ENCODE measurements at regions of chr2 and their contacts with region 1.

Region 1: GRCh38 chr2:173027181-173028128 is 48.2 kb upstream of the MAP3K20 start:
- DNase-seq: peak; percentile 87
- ATAC-seq: peak; percentile 63
- H3K4me3 Mint-ChIP-seq: no peak overlapping the region
- H3K27ac Mint-ChIP-seq: no peak overlapping the region
- H3K4me1 Mint-ChIP-seq: peaks cover 4% of the 10 kb centered on the region
- H3K27me3 Mint-ChIP-seq: peaks cover 6% of the 10 kb centered on the region

Region 2: GRCh38 chr2:173002751-173003541 is 24.5 kb before region 1 on chr2:
- CTCF ChIA-PET with region 1: interaction called, 12 read pairs
- POLR2A ChIA-PET with region 1: no interaction called
- intact Hi-C with region 1: no loop called
- DNase-seq: no peak
- ATAC-seq: no peak
- H3K4me3 Mint-ChIP-seq: no peak overlapping the region
- H3K27ac Mint-ChIP-seq: no peak overlapping the region
- H3K4me1 Mint-ChIP-seq: no peaks in the 10 kb centered on the region
- H3K27me3 Mint-ChIP-seq: peaks cover 4% of the 10 kb centered on the region

Region 3: DNA sequence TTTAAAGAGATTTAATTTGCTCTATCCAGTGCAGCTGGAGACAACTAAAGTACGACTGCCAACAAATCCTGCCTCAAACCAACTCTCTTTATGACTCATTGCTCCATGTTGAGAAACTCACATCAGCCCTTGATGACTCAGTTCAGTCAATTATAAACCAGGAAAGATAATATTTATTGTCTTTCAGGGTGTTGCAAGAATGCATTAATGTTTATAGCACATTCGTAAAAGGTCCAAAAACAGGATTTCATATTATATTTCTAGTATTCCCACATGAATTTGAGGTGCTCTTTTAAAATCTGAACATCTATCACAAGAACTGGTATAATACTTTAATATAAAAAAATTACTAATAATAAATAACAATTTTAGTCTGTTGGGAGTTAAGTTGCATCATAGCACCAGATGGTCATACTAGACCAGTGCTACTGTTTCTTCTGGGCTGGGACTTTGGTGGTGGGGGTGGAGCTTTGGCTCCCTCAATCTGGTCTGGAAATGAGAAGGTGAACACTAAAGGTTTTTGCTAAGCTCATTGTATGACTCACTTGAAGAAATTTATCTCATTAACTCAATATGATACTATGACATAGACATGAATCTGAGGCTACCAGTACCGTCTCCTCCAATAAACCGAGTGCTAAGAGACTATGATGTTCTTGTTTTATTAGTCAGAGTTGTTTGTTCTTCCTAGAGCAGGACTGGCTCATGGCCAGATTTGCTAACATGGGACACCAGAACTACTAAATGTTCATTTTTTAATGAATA is 21.6 kb after region 1 on chr2:
- CTCF ChIA-PET with region 1: interaction called, 16 read pairs
- POLR2A ChIA-PET with region 1: interaction called, 3 read pairs
- intact Hi-C with region 1: no loop called
- DNase-seq: peak; percentile 70
- ATAC-seq: peak; percentile 98
- H3K4me3 Mint-ChIP-seq: peak overlapping the region; percentile 22
- H3K27ac Mint-ChIP-seq: peak overlapping the region; percentile 59
- H3K4me1 Mint-ChIP-seq: peaks cover 17% of the 10 kb centered on the region
- H3K27me3 Mint-ChIP-seq: peaks cover 9% of the 10 kb centered on the region

Region 4: GRCh38 chr2:173075781-173076580 is 48.5 kb after region 1 on chr2 and contains the start of gene MAP3K20:
- CTCF ChIA-PET with region 1: interaction called, 12 read pairs
- POLR2A ChIA-PET with region 1: no interaction called
- intact Hi-C with region 1: loop called in 1 of 2 experiments (anchors 2 kb)
- DNase-seq: peak; percentile 73
- ATAC-seq: peak; percentile 85
- H3K4me3 Mint-ChIP-seq: peak within 1 kb of the TSS; percentile 76
- H3K27ac Mint-ChIP-seq: peak within 1 kb of the TSS; percentile 76
- H3K4me1 Mint-ChIP-seq: peaks cover 22% of the 10 kb centered on the region
- H3K27me3 Mint-ChIP-seq: peaks cover 33% of the 10 kb centered on the region
- total RNA-seq, gene MAP3K20: 8.1 to 8.4 TPM

Region 5: DNA sequence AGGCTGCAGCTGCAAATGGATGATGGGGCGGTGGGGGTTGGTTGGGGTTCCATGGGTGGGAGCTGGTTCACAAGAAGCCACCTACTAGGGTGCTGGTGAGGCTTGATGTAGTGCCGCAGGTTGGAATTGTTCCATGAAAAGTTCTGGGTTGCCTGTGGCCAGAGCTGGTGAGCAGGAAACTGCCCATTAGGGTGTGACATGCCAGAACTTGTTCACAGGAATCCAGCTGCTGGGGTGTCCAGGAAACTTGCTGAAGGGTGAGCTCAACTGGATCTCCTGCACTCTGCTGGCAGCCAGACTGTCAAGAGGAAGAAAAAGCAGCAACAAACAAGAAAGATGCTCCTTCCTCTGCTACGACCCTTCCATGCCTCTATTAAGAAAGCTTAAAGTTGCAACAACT is 97.0 kb after region 1 on chr2:
- CTCF ChIA-PET with region 1: no interaction called
- POLR2A ChIA-PET with region 1: no interaction called
- intact Hi-C with region 1: no loop called
- DNase-seq: no peak
- ATAC-seq: no peak
- H3K4me3 Mint-ChIP-seq: no peak overlapping the region
- H3K27ac Mint-ChIP-seq: no peak overlapping the region
- H3K4me1 Mint-ChIP-seq: peaks cover 6% of the 10 kb centered on the region
- H3K27me3 Mint-ChIP-seq: peaks cover 6% of the 10 kb centered on the region

Region 6: GRCh38 chr2:173210270-173211196 is 183.1 kb after region 1 on chr2:
- CTCF ChIA-PET with region 1: interaction called, 307 read pairs
- POLR2A ChIA-PET with region 1: no interaction called
- intact Hi-C with region 1: loop called (anchors 1 kb)
- DNase-seq: peak; percentile 70
- ATAC-seq: peak; percentile 65
- H3K4me3 Mint-ChIP-seq: no peak overlapping the region
- H3K27ac Mint-ChIP-seq: no peak overlapping the region
- H3K4me1 Mint-ChIP-seq: no peaks in the 10 kb centered on the region
- H3K27me3 Mint-ChIP-seq: peaks cover 9% of the 10 kb centered on the region